Panc1 (cell line): ENCODE measurements at regions of chr3 and their contacts with region 1.

Region 1: GRCh38 chr3:46917257-46917656 is 39.7 kb downstream of the PTH1R start:
- DNase-seq: no peak
- ATAC-seq: no peak
- H3K4me3 ChIP-seq: no peak overlapping the region
- H3K27ac ChIP-seq: no peak overlapping the region
- H3K4me1 ChIP-seq: no peaks in the 10 kb centered on the region
- H3K27me3 ChIP-seq: no peaks in the 10 kb centered on the region
- CTCF ChIP-seq: no peak

Region 2: DNA sequence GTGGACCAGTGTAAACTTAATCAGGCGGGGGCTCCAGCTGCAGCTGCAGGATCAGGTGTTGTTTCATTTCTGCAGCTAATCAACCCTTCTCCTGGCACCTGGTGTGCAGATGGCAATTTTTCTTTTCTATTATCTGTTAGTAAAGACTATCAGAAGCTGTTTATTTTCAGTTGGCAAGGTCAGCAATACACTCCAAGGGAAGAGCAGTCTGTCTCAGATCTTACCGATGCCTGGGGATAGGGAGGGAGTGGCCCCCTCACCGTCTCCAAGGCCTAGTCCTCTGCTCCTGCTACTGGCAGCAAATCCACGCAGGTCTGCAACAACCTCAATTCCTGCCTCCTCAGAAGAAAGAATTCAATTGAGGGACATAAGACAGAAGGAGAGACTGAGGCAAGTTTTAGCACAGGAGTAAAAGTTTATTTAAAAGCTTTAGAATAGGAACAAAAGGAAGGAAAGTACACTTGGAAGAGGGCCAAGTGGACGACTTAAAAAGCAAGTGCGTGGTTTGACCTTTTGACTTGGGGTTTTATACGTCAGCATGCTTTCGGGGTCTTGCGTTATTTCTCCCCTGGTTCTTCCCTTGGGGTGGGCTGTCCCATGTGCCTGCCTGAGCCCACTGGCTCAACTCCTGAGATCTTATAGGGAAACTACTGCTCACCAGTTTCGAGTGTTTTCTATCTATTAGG is 501.0 kb before region 1 on chr3:
- CTCF ChIA-PET with region 1: no interaction called
- POLR2A ChIA-PET with region 1: no interaction called
- in situ Hi-C with region 1: no loop called
- intact Hi-C with region 1: no loop called
- DNase-seq: no peak
- ATAC-seq: no peak
- H3K4me3 ChIP-seq: no peak overlapping the region
- H3K27ac ChIP-seq: no peak overlapping the region
- H3K4me1 ChIP-seq: no peaks in the 10 kb centered on the region
- H3K27me3 ChIP-seq: no peaks in the 10 kb centered on the region
- CTCF ChIP-seq: no peak

Region 3: DNA sequence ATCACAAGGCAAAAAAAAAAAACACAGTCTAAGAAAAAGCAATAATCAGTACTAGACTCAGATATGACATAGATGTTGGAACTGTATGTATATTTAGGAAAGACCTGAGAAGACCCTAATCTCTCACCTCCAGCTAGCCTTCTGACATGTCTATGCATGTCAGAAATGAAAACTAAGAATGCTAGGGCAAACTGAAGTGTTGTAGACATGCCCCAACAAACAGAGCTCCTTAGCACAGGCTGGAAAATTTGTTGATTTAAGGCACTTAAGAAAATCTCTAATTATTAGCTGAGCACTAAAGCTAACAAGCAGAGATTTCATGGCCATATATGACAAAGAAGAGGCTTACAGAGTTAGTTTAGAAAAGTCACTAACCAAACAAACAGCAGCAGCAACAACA is 154.1 kb before region 1 on chr3:
- CTCF ChIA-PET with region 1: no interaction called
- POLR2A ChIA-PET with region 1: no interaction called
- in situ Hi-C with region 1: no loop called
- intact Hi-C with region 1: no loop called
- DNase-seq: no peak
- ATAC-seq: no peak
- H3K4me3 ChIP-seq: no peak overlapping the region
- H3K27ac ChIP-seq: no peak overlapping the region
- H3K4me1 ChIP-seq: no peaks in the 10 kb centered on the region
- H3K27me3 ChIP-seq: no peaks in the 10 kb centered on the region
- CTCF ChIP-seq: no peak

Region 4: GRCh38 chr3:46820852-46821251 is 96.4 kb before region 1 on chr3:
- CTCF ChIA-PET with region 1: no interaction called
- POLR2A ChIA-PET with region 1: no interaction called
- in situ Hi-C with region 1: no loop called
- intact Hi-C with region 1: no loop called
- DNase-seq: no peak
- ATAC-seq: no peak
- H3K4me3 ChIP-seq: no peak overlapping the region
- H3K27ac ChIP-seq: no peak overlapping the region
- H3K4me1 ChIP-seq: no peaks in the 10 kb centered on the region
- H3K27me3 ChIP-seq: no peaks in the 10 kb centered on the region
- CTCF ChIP-seq: no peak

Region 5: GRCh38 chr3:47186285-47186684 is 269.0 kb after region 1 on chr3:
- CTCF ChIA-PET with region 1: no interaction called
- POLR2A ChIA-PET with region 1: interaction called, 19 read pairs
- in situ Hi-C with region 1: no loop called
- intact Hi-C with region 1: no loop called
- DNase-seq: no peak
- ATAC-seq: no peak
- H3K4me3 ChIP-seq: no peak overlapping the region
- H3K27ac ChIP-seq: no peak overlapping the region
- H3K4me1 ChIP-seq: no peaks in the 10 kb centered on the region
- H3K27me3 ChIP-seq: no peaks in the 10 kb centered on the region
- CTCF ChIP-seq: no peak